SK-N-SH (cell line): ENCODE measurements at regions of chr4 and their contacts with region 1.

Region 1: GRCh38 chr4:57163530-57164459 is 53.6 kb upstream of the IGFBP7 start:
- DNase-seq: peak; percentile 89
- H3K4me3 ChIP-seq: peak overlapping the region; percentile 70 to 91
- H3K27ac ChIP-seq: peak overlapping the region; percentile 71 to 78
- H3K4me1 ChIP-seq: peaks cover 3 to 9% of the 10 kb centered on the region in 2 experiments; a peak in 3 of 4 replicates
- H3K27me3 ChIP-seq: no peaks in the 10 kb centered on the region
- CTCF ChIP-seq: peak; percentile 74
- EP300 ChIP-seq: no peak
- RAD21 ChIP-seq: peak; percentile 91

Region 2: GRCh38 chr4:56739066-56739777 is 424.6 kb before region 1 on chr4:
- CTCF ChIA-PET with region 1: no interaction called
- POLR2A ChIA-PET with region 1: no interaction called
- DNase-seq: no peak
- H3K4me3 ChIP-seq: no peak overlapping the region
- H3K27ac ChIP-seq: no peak overlapping the region
- H3K4me1 ChIP-seq: no peaks in the 10 kb centered on the region; a peak in 1 of 4 replicates
- H3K27me3 ChIP-seq: no peaks in the 10 kb centered on the region; the same call in 1 of the 2 replicates
- CTCF ChIP-seq: no peak
- EP300 ChIP-seq: no peak
- RAD21 ChIP-seq: no peak

Region 3: DNA sequence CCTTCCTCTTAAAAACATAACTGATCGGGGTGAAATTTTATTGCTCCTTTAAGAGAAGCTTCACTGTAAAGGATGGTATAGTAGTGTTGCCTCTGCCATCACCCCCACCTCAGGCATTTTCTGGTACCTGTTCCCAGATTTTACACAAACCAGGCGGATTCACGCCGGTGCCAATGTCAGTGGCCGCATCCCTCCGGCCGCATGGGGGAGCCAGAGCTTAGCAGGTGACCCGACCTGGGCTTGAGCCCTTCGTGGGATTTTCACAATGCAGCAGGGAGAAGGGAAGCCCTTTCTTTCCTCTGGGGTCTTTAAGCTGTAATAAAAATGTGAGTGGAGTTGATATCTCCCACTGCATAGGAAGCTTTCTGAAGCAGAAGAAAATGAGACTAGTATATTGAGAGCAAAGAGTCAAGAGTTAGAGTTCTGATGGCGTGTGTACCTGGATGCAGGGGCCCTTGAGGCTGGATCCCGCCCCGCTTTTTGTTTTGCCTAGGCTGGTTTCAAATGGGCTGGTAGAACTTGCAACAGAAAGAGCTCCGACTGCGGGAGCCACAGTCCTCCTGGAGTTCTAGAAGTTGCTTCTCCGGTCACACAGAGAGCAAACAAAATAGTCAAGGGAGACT is 125.7 kb before region 1 on chr4:
- CTCF ChIA-PET with region 1: interaction called, 139 read pairs
- POLR2A ChIA-PET with region 1: no interaction called
- DNase-seq: peak; percentile 72
- H3K4me3 ChIP-seq: 0 out of 4 replicates have a peak overlapping the region, but pooled peaks of 1 of the 2 experiments have one; percentile 27
- H3K27ac ChIP-seq: peak overlapping the region in 1 of 2 experiments; percentile 16; a peak in 1 of 4 replicates
- H3K4me1 ChIP-seq: peaks cover 0 to 12% of the 10 kb centered on the region in 2 experiments; a peak in 2 of 4 replicates
- H3K27me3 ChIP-seq: no peaks in the 10 kb centered on the region
- CTCF ChIP-seq: peak; percentile 97
- EP300 ChIP-seq: no peak
- RAD21 ChIP-seq: peak; percentile 98

Region 4: DNA sequence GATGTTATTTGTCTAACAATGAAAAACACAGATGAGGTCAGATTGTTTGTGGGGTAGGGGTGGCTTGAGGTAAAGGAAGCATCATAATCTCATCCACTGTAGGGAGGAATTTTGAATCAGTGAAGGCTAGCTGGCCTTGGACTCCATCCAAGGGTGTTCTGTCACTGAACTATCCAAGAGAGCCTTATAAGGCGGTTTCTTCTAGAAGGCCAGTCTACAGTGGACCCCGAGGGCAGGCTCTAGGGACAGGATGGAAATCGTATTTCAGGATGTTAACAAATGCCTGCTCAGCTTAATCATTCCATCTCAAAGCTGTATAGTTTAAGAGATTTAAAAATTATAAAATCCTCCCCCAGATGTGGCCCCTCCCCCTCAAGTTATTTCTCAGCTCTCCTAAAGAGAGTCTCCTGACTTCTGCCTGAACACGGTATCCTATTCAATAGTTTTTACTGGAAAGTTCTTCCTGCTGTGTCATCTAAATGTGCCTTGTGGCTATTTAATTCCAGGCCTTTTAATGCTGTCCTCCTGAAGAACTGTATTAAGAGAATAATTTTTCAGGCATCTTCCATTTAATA is 61.7 kb before region 1 on chr4:
- CTCF ChIA-PET with region 1: interaction called, 16 read pairs
- POLR2A ChIA-PET with region 1: no interaction called
- DNase-seq: no peak
- H3K4me3 ChIP-seq: no peak overlapping the region
- H3K27ac ChIP-seq: peak overlapping the region; percentile 59 to 84
- H3K4me1 ChIP-seq: peaks cover 11 to 29% of the 10 kb centered on the region in 2 experiments; a peak in 3 of 4 replicates
- H3K27me3 ChIP-seq: no peaks in the 10 kb centered on the region
- CTCF ChIP-seq: no peak
- EP300 ChIP-seq: no peak
- RAD21 ChIP-seq: no peak

Region 5: GRCh38 chr4:57182132-57182874 is 18.5 kb after region 1 on chr4:
- CTCF ChIA-PET with region 1: interaction called, 30 read pairs
- POLR2A ChIA-PET with region 1: no interaction called
- DNase-seq: peak; percentile 61
- H3K4me3 ChIP-seq: no peak overlapping the region
- H3K27ac ChIP-seq: no peak overlapping the region
- H3K4me1 ChIP-seq: peaks cover 0 to 5% of the 10 kb centered on the region in 2 experiments; a peak in 1 of 4 replicates
- H3K27me3 ChIP-seq: no peaks in the 10 kb centered on the region
- CTCF ChIP-seq: no peak
- EP300 ChIP-seq: no peak
- RAD21 ChIP-seq: no peak

Region 6: DNA sequence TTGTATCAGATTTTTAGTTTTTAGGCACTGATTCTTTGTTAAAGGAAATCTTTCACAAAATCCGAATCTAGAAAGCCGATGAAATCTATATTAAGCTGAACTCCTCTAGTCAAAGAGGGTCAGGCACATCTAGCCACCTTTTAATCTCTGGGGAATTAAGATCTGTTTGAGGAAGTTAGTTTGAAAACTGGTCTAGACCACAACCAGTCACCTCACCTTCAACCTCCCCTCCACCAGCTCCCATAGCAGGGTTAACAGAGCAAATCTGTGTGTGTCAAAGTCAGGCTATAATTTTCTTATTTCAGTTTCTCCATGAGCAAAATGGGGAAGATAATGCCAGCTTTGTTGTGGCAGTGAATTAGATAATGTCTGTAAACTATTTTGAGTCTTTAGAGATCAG is 56.4 kb after region 1 on chr4:
- CTCF ChIA-PET with region 1: interaction called, 10 read pairs
- POLR2A ChIA-PET with region 1: no interaction called
- DNase-seq: no peak
- H3K4me3 ChIP-seq: no peak overlapping the region
- H3K27ac ChIP-seq: no peak overlapping the region
- H3K4me1 ChIP-seq: no peaks in the 10 kb centered on the region
- H3K27me3 ChIP-seq: no peaks in the 10 kb centered on the region
- CTCF ChIP-seq: no peak
- EP300 ChIP-seq: no peak
- RAD21 ChIP-seq: no peak

Region 7: DNA sequence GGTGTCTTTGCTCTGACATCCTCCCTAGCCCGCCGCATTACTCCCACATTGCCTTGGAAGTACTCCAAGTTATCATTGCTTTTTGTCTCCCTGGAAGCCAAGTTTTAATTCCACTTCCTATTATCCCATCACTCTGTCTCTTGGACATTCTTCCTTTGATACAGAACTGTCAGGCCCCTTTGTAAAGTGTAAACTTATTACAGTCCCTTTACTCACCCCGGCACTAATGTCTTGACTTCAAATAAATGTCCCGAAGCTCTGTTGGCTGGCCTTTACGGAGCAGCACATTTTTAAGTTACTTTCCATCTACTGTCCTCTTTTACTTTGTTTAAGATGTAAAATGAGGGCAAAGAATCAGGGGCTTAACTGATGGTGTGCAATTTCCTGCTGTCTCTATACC is 169.9 kb after region 1 on chr4:
- CTCF ChIA-PET with region 1: no interaction called
- POLR2A ChIA-PET with region 1: no interaction called
- DNase-seq: no peak
- H3K4me3 ChIP-seq: no peak overlapping the region
- H3K27ac ChIP-seq: no peak overlapping the region
- H3K4me1 ChIP-seq: no peaks in the 10 kb centered on the region
- H3K27me3 ChIP-seq: no peaks in the 10 kb centered on the region
- CTCF ChIP-seq: no peak
- EP300 ChIP-seq: no peak
- RAD21 ChIP-seq: no peak

Region 8: GRCh38 chr4:57405385-57405784 is 241.6 kb after region 1 on chr4:
- CTCF ChIA-PET with region 1: interaction called, 19 read pairs
- POLR2A ChIA-PET with region 1: no interaction called
- DNase-seq: peak; percentile 5
- H3K4me3 ChIP-seq: no peak overlapping the region
- H3K27ac ChIP-seq: peak overlapping the region in 1 of 2 experiments; percentile 10; a peak in 1 of 4 replicates
- H3K4me1 ChIP-seq: peaks cover 0 to 6% of the 10 kb centered on the region in 2 experiments; a peak in 2 of 4 replicates
- H3K27me3 ChIP-seq: no peaks in the 10 kb centered on the region
- CTCF ChIP-seq: no peak
- EP300 ChIP-seq: peak in 1 of 2 experiments; percentile 34; a peak in 1 of 4 replicates
- RAD21 ChIP-seq: no peak

Region 9: DNA sequence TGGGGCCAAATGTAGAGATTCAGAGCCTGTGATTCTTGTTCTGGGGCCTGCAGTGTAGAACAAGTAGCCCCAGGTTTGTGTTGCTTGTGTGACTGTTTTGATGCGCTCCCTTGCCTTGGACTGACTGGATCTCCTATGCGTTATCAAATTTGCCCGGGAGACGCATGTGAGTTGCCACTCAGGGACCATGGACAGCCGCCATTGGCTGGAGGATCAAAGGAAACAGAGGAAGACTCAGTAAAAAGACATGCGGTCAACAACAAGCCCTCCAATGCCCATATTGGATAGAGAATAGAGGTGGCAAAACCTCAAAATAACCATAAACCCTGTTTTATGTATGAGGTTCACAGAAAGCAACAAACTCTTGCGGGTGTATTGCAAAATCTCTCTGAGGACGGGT is 273.9 kb after region 1 on chr4:
- CTCF ChIA-PET with region 1: interaction called, 34 read pairs
- POLR2A ChIA-PET with region 1: no interaction called
- DNase-seq: no peak
- H3K4me3 ChIP-seq: no peak overlapping the region
- H3K27ac ChIP-seq: no peak overlapping the region
- H3K4me1 ChIP-seq: no peaks in the 10 kb centered on the region
- H3K27me3 ChIP-seq: no peaks in the 10 kb centered on the region
- CTCF ChIP-seq: no peak
- EP300 ChIP-seq: no peak
- RAD21 ChIP-seq: no peak